Upper lobe of right lung (tissue), 1 donor: ENCODE measurements at regions of chr1 and their contacts with region 1.

Region 1: GRCh38 chr1:39098546-39099250 is 72.5 kb downstream of the NDUFS5 start:
- DNase-seq: peak; percentile 71
- ATAC-seq: peak; percentile 89
- H3K4me3 ChIP-seq: no peak overlapping the region
- H3K27ac ChIP-seq: no peak overlapping the region
- H3K4me1 ChIP-seq: peaks cover 16% of the 10 kb centered on the region
- H3K27me3 ChIP-seq: no peaks in the 10 kb centered on the region
- CTCF ChIP-seq: peak; percentile 78

Region 2: DNA sequence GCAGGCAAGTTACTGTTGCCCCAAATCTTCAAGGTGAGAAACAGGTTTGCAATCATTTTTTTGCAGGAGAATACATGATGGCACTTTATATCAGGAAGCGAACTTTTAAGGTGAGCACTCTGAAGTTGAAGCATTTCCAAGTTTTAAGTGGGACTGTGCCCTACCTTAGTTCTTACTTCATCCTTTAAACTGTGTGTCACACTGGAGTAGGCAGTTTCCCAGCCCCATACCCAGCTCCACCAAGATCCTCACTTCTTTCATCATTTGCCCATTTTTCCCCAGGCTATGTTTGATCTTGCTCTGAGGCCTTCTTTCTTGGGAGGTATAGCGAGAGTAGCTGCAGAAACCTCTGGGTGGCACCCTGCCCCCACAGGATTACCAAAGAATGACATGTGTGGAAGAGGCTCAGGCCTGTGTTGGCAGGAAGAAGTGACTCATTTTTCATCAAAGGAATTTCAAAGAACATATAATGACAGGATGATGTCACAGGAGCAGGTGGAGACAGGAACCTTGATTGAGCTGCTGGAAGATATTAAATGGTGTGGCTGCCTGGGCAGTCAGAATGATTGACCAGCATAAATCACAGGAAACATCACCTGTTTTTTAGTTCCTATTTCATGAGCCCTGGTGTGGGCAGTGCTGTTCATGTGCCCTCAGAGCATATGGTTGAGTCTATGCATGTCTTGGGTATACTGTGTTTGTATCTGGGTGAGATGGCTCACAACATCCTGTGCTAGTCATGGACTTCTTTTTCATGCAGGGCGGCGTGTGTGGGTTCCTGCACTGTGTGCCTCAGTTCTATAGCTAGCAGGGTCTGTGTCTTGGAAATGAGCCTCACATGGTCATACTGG is 85.0 kb after region 1 on chr1:
- intact Hi-C with region 1: loop called (anchors 10 kb)
- DNase-seq: peak; percentile 76
- ATAC-seq: peak; percentile 92
- H3K4me3 ChIP-seq: no peak overlapping the region
- H3K27ac ChIP-seq: peak overlapping the region; percentile 63
- H3K4me1 ChIP-seq: peaks cover 52% of the 10 kb centered on the region
- H3K27me3 ChIP-seq: no peaks in the 10 kb centered on the region
- CTCF ChIP-seq: peak; percentile 46

Region 3: DNA sequence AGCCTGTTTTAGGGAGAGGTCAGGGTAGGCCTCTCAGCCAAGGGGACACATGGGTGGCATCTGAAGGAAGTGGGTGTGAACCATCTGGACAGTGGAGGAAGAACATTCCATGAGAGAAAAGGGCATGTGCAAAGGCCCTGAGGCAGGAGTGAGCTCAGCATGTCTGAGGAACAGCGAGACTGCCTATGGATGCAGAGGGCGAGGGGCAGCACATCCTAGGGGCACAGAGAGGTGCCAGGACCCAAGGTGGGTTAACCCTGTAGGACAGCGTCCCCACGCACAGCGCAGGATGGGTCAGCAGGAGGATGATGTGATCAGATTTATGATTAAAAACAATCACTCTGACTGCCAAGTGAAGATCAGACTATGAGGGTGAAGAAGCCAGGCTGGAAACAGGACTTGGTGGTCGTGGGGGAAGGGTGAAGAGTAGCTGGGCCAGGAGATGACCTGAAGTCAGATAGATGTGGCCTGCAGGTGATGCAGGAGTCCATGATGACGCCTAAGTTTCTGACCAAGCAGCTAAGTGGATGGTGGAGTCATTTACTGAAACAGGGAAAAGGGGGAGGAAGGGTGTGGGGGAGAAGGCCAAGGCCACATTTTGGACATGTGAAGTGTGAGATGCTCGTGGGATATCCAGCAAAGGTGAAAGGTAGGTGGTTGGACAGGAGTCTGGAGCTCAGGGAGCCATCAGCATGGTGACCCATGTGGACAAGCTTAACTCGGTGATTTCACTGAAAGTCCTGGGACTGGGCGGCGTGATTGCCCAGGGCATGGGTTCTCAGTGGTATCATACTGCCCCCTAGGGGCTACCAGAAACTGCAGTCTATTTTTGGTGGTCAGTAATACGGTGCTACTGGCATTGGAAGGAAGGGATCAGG is 440.1 kb after region 1 on chr1:
- intact Hi-C with region 1: loop called (anchors 10 kb)
- DNase-seq: peak; percentile 73
- ATAC-seq: peak; percentile 93
- H3K4me3 ChIP-seq: no peak overlapping the region
- H3K27ac ChIP-seq: no peak overlapping the region
- H3K4me1 ChIP-seq: peaks cover 5% of the 10 kb centered on the region
- H3K27me3 ChIP-seq: no peaks in the 10 kb centered on the region
- CTCF ChIP-seq: peak; percentile 91